ENCODE measurements at regions of chr6 and their contacts with region 1.

Region 1: GRCh38 chr6:127302728-127303660 is 36.3 kb downstream of the RNF146 start:
- DNase-seq: peak in 12 of 14 experiments; percentile 2 to 76 (median 38)
- ATAC-seq: peak; percentile 97
- H3K4me3 ChIP-seq: no peak overlapping the region
- H3K4me3 Mint-ChIP-seq: no peak overlapping the region
- H3K27ac ChIP-seq: no peak overlapping the region
- H3K27ac Mint-ChIP-seq: peak overlapping the region; percentile 13
- H3K4me1 ChIP-seq: peaks cover 4% of the 10 kb centered on the region
- H3K4me1 Mint-ChIP-seq: peaks cover 53% of the 10 kb centered on the region
- H3K27me3 ChIP-seq: no peaks in the 10 kb centered on the region
- H3K27me3 Mint-ChIP-seq: no peaks in the 10 kb centered on the region
- CTCF ChIP-seq: peak; percentile 84

Region 2: DNA sequence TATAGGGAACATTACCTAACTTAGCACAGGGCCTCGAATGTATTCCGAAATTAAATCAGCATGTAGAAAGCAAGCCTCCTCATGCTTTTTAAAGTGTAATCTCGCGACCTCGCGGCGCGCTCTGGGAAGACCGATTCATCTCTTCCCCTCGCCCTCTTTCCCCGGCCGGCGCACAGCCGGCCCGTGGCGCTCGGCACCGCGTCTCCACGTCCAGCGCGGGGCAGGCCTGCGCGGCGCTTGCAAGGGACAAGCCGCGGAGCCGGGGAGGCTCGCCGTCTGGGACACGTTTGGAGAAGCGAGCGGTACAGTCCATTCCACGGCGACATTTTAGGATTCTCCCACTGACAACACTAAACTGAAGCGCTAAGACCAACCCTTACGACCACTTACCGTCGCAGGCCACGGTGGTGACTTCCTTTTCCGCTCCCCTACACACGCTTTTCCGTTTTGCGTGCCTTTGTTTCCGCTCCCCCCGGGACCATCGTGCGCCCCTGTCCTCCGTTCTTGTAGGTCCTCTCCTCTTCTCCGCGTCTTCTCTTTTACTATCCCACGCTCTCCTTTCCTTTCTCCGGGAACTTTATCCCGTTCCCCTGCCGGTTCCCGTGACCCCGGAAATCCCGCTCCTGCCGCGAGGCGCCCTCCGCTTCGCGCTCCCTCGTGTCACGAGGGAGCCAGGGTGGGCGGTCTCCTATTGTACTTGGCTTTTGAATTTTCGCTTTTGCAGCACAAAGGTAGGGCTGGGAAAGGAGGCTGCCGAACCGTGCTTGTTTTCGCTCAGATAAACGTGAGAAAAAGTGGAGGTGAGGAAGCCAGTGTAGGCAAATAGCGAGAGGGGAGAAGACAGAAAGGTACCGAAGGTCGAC is 40.2 kb after region 1 on chr6 and contains the start of gene ECHDC1:
- CTCF ChIA-PET with region 1: no interaction called
- POLR2A ChIA-PET with region 1: no interaction called
- intact Hi-C with region 1: loop called in 1 of 2 experiments (anchors 5 kb)
- DNase-seq: peak; percentile 44 to 82 (median 60)
- ATAC-seq: peak; percentile 83
- H3K4me3 ChIP-seq: peak within 1 kb of the TSS; percentile 91
- H3K4me3 Mint-ChIP-seq: no peak within 1 kb of the TSS
- H3K27ac ChIP-seq: peak within 1 kb of the TSS; percentile 72
- H3K27ac Mint-ChIP-seq: no peak within 1 kb of the TSS
- H3K4me1 ChIP-seq: peaks cover 28% of the 10 kb centered on the region
- H3K4me1 Mint-ChIP-seq: peaks cover 8% of the 10 kb centered on the region
- H3K27me3 ChIP-seq: no peaks in the 10 kb centered on the region
- H3K27me3 Mint-ChIP-seq: no peaks in the 10 kb centered on the region
- CTCF ChIP-seq: no peak
- total RNA-seq, gene ECHDC1: 6.5 to 7.4 TPM

Region 3: DNA sequence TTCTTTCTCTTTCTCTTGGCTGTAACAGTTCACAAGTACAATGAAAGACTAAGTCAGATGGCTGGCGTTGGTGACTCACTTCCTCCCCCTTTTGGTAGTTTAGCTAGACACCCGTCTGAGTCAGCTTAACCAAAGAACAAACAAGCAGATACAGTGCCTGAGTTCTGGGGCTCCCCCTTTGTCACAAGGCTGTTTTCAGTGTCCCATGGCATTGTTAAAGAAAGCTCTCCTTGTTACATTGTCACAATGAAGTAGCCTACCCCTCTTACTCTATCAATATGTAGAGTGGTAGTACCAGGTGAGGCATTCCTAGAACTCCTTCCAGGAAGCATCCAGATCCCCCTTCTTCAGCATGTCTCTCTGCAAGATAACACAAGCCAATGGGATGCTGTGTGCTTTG is 117.6 kb after region 1 on chr6:
- CTCF ChIA-PET with region 1: interaction called, 7 read pairs
- POLR2A ChIA-PET with region 1: no interaction called
- intact Hi-C with region 1: loop called (anchors 1 to 2 kb)
- DNase-seq: peak; percentile 30 to 83 (median 51)
- ATAC-seq: peak; percentile 99
- H3K4me3 ChIP-seq: no peak overlapping the region
- H3K4me3 Mint-ChIP-seq: no peak overlapping the region
- H3K27ac ChIP-seq: no peak overlapping the region
- H3K27ac Mint-ChIP-seq: no peak overlapping the region
- H3K4me1 ChIP-seq: no peaks in the 10 kb centered on the region
- H3K4me1 Mint-ChIP-seq: peaks cover 6% of the 10 kb centered on the region
- H3K27me3 ChIP-seq: no peaks in the 10 kb centered on the region
- H3K27me3 Mint-ChIP-seq: no peaks in the 10 kb centered on the region
- CTCF ChIP-seq: peak; percentile 65

Region 4: GRCh38 chr6:127516666-127517273 is 213.8 kb after region 1 on chr6:
- CTCF ChIA-PET with region 1: interaction called, 17 read pairs
- POLR2A ChIA-PET with region 1: no interaction called
- intact Hi-C with region 1: no loop called
- DNase-seq: peak in 11 of 14 experiments; percentile 6 to 70 (median 31)
- ATAC-seq: peak; percentile 37
- H3K4me3 ChIP-seq: peak overlapping the region; percentile 80
- H3K4me3 Mint-ChIP-seq: peak overlapping the region; percentile 87
- H3K27ac ChIP-seq: no peak overlapping the region
- H3K27ac Mint-ChIP-seq: peak overlapping the region; percentile 57
- H3K4me1 ChIP-seq: peaks cover 37% of the 10 kb centered on the region
- H3K4me1 Mint-ChIP-seq: peaks cover 38% of the 10 kb centered on the region
- H3K27me3 ChIP-seq: peaks cover 14 to 35% of the 10 kb centered on the region in 2 experiments
- H3K27me3 Mint-ChIP-seq: peaks cover 42% of the 10 kb centered on the region
- CTCF ChIP-seq: peak; percentile 65

Region 5: GRCh38 chr6:127570739-127571389 is 267.9 kb after region 1 on chr6:
- CTCF ChIA-PET with region 1: no interaction called
- POLR2A ChIA-PET with region 1: no interaction called
- intact Hi-C with region 1: no loop called
- DNase-seq: no peak
- ATAC-seq: no peak
- H3K4me3 ChIP-seq: no peak overlapping the region
- H3K4me3 Mint-ChIP-seq: no peak overlapping the region
- H3K27ac ChIP-seq: no peak overlapping the region
- H3K27ac Mint-ChIP-seq: no peak overlapping the region
- H3K4me1 ChIP-seq: no peaks in the 10 kb centered on the region
- H3K4me1 Mint-ChIP-seq: peaks cover 6% of the 10 kb centered on the region
- H3K27me3 ChIP-seq: no peaks in the 10 kb centered on the region
- H3K27me3 Mint-ChIP-seq: no peaks in the 10 kb centered on the region
- CTCF ChIP-seq: no peak

Region 6: GRCh38 chr6:128731249-128732165 is 1428.5 kb after region 1 on chr6:
- CTCF ChIA-PET with region 1: no interaction called
- POLR2A ChIA-PET with region 1: no interaction called
- intact Hi-C with region 1: loop called in 1 of 2 experiments (anchors 2 kb)
- DNase-seq: peak in 3 of 14 experiments; percentile 9 to 38 (median 31)
- ATAC-seq: no peak
- H3K4me3 ChIP-seq: no peak overlapping the region
- H3K4me3 Mint-ChIP-seq: no peak overlapping the region
- H3K27ac ChIP-seq: no peak overlapping the region
- H3K27ac Mint-ChIP-seq: no peak overlapping the region
- H3K4me1 ChIP-seq: no peaks in the 10 kb centered on the region
- H3K4me1 Mint-ChIP-seq: no peaks in the 10 kb centered on the region
- H3K27me3 ChIP-seq: no peaks in the 10 kb centered on the region
- H3K27me3 Mint-ChIP-seq: peaks cover 24% of the 10 kb centered on the region
- CTCF ChIP-seq: peak; percentile 50